ENCODE measurements at regions of chr2 and their contacts with region 1.

Region 1: GRCh38 chr2:54983345-54984260 is 66.6 kb downstream of the RTN4 start:
- DNase-seq: peak; percentile 49
- H3K4me3 Mint-ChIP-seq: peak overlapping the region; percentile 16
- H3K27ac Mint-ChIP-seq: peak overlapping the region; percentile 32
- H3K4me1 Mint-ChIP-seq: peaks cover 43% of the 10 kb centered on the region
- H3K27me3 Mint-ChIP-seq: no peaks in the 10 kb centered on the region
- CTCF ChIP-seq: no peak

Region 2: GRCh38 chr2:54999182-54999581 is 15.6 kb after region 1 on chr2:
- CTCF ChIA-PET with region 1: interaction called, 3 read pairs
- POLR2A ChIA-PET with region 1: interaction called, 16 read pairs
- intact Hi-C with region 1: no loop called
- DNase-seq: peak; percentile 68
- H3K4me3 Mint-ChIP-seq: peak overlapping the region; percentile 62
- H3K27ac Mint-ChIP-seq: peak overlapping the region; percentile 85
- H3K4me1 Mint-ChIP-seq: peaks cover 49% of the 10 kb centered on the region
- H3K27me3 Mint-ChIP-seq: no peaks in the 10 kb centered on the region
- CTCF ChIP-seq: no peak